ENCODE measurements at regions of chr17 and their contacts with region 1.

Region 1: DNA sequence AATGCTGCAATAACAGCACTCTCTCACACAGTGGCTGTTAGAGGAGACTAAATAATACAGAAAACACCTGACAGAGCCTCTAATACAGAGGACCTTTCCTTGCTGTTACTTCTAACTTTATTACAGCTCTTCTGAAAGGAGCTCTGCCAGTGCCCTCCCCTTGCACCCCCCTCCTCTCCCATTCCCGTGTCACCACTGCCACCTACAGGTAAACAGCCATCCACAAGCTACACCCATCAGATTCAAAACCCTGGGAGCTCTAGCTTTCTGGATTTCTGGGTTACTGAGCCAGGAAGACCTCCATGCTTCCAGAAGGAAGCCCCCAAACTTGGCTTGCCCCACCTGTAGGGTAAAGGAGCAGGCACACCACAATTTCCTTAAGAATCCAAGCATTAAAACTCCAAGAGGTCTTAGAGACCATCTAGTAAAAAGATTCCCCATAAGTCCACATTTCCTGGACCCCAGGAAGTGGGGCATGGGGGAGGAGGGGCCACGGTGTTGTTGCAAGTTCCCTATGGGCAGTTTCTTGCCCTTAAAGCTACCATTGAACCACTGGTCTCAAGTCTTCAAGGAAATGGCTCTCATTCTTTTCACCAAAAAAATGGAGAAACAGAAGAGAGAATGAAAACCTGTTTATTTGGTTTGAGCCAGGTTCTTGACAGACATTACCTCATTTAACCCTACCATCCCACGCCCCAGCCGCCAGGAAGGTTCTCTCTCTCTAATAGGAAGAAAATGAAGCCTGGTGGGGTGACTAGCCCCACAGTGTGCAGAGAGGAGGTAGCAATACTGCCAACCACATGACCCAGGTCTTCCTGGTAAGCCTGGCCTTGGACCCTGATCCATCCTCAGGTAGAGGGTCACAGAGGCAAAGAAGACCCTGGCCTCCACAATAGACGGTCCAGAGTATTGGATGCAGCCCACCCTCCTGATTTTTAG is 52.8 kb downstream of the TOM1L2 start:
- DNase-seq: peak; percentile 77
- ATAC-seq: peak; percentile 81
- H3K4me3 Mint-ChIP-seq: no peak overlapping the region
- H3K27ac Mint-ChIP-seq: no peak overlapping the region
- H3K4me1 Mint-ChIP-seq: peaks cover 14% of the 10 kb centered on the region
- H3K27me3 Mint-ChIP-seq: no peaks in the 10 kb centered on the region

Region 2: GRCh38 chr17:17681187-17681848 is 238.1 kb before region 1 on chr17 and contains the start of gene RAI1:
- CTCF ChIA-PET with region 1: interaction called, 11 read pairs
- DNase-seq: peak; percentile 75
- ATAC-seq: peak; percentile 72
- H3K4me3 Mint-ChIP-seq: peak within 1 kb of the TSS; percentile 85
- H3K27ac Mint-ChIP-seq: peak within 1 kb of the TSS; percentile 83
- H3K4me1 Mint-ChIP-seq: peaks cover 37% of the 10 kb centered on the region
- H3K27me3 Mint-ChIP-seq: peaks cover 13% of the 10 kb centered on the region
- total RNA-seq, gene RAI1: 17.4 to 24.4 TPM

Region 3: GRCh38 chr17:17783116-17783824 is 136.2 kb before region 1 on chr17:
- CTCF ChIA-PET with region 1: no interaction called
- DNase-seq: peak; percentile 73
- ATAC-seq: peak; percentile 66
- H3K4me3 Mint-ChIP-seq: peak overlapping the region; percentile 57
- H3K27ac Mint-ChIP-seq: no peak overlapping the region
- H3K4me1 Mint-ChIP-seq: peaks cover 5% of the 10 kb centered on the region
- H3K27me3 Mint-ChIP-seq: peaks cover 30% of the 10 kb centered on the region

Region 4: DNA sequence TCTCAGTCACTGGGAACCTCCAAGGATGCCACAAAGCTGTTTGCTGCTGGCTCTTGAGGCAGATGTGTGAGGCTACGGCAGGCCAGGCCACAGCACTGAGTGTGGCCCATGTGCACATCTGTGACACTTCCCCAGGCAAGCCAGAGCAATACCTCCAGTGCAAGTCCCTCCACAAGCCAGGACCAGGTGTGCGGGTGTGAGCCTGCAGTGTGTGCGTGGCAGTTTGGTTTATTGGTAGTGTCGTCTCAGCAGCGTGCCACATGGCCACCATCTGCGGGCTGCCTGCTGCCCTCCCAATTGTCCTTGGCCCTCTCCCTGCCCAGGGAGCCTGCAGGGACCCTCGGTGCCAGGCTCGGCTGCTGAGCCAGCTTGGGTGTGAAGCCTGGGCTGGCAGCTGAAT is 72.8 kb before region 1 on chr17:
- CTCF ChIA-PET with region 1: no interaction called
- DNase-seq: no peak
- ATAC-seq: no peak
- H3K4me3 Mint-ChIP-seq: no peak overlapping the region
- H3K27ac Mint-ChIP-seq: no peak overlapping the region
- H3K4me1 Mint-ChIP-seq: peaks cover 50% of the 10 kb centered on the region
- H3K27me3 Mint-ChIP-seq: no peaks in the 10 kb centered on the region

Region 5: DNA sequence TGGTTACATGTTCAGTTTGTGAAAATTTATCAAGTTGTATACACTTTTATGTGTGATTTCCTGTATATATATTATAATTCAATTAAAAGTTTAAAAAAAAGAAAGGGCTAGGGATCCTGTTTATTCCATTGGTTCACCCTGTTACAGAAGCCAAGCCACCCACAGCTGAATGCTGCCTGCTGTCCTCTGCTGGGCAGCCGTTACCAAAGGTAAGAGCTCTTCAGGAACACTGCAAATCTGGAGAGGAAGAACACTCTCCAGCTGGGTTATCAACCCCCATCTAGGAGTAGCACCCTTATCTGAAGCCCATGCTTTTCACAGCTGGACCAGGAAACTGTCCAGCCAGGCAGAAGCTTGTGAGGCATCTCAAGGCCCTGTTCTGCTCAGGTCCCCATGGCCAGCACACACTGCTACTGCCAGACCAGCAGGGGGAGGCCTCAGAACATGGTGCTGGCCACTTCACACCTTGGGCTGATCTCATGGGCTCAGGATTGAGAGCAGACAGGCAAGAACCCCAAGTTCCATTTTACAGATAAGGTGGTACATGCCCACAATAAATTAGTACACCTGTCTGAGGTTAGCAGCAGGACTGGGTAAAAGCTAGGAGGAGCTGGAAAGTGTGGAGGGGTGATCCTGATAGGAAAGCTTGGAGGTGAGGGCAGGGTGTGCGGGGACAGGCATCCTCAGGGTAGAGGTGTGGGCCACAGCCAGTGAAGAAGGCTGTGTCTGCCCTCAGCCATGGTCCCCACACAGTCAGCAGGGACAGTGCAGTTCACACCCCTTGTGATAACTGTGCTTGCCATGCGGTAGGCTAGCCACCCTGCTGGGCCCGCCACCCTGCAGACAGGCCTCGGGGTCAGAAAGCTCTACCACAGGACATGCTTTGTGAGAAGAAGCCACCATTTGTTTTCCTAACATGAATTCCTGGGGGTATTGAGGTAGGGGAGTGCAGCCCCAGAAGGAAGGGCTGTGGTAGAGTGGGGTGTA is 28.4 kb before region 1 on chr17:
- CTCF ChIA-PET with region 1: interaction called, 10 read pairs
- DNase-seq: peak; percentile 71
- ATAC-seq: peak; percentile 87
- H3K4me3 Mint-ChIP-seq: no peak overlapping the region
- H3K27ac Mint-ChIP-seq: no peak overlapping the region
- H3K4me1 Mint-ChIP-seq: no peaks in the 10 kb centered on the region
- H3K27me3 Mint-ChIP-seq: no peaks in the 10 kb centered on the region

Region 6: DNA sequence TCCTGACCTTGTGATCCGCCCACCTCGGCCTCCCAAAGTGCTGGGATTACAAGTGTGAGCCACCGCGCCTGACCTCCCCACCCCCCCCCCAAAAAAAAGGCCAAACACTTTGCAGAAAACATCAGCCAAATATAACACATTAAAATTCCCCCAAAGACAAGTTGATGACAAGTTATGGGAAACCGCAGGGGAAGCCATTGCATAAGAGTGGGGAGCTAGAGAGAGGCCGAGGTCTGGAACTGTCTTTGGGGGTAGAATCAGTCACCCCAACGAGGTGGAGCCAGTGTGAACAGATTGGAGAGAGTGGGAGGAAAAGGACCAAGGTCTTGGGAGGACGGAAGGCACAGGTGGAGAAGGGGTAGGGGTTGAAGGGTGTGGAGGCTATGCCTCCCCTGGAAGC is 56.0 kb after region 1 on chr17:
- CTCF ChIA-PET with region 1: no interaction called
- DNase-seq: no peak
- ATAC-seq: no peak
- H3K4me3 Mint-ChIP-seq: no peak overlapping the region
- H3K27ac Mint-ChIP-seq: no peak overlapping the region
- H3K4me1 Mint-ChIP-seq: peaks cover 31% of the 10 kb centered on the region
- H3K27me3 Mint-ChIP-seq: no peaks in the 10 kb centered on the region

Region 7: GRCh38 chr17:18087610-18088491 is 168.4 kb after region 1 on chr17 and contains the start of gene DRG2:
- CTCF ChIA-PET with region 1: no interaction called
- DNase-seq: peak; percentile 91
- ATAC-seq: peak; percentile 95
- H3K4me3 Mint-ChIP-seq: peak within 1 kb of the TSS; percentile 99
- H3K27ac Mint-ChIP-seq: peak within 1 kb of the TSS; percentile 96
- H3K4me1 Mint-ChIP-seq: peaks cover 25% of the 10 kb centered on the region
- H3K27me3 Mint-ChIP-seq: no peaks in the 10 kb centered on the region
- total RNA-seq, gene DRG2: 54.5 to 57.0 TPM

Measured in activated CD8-positive, alpha-beta memory T cell treated with anti-CD3 and anti-CD28 coated beads, Interleukin-2, amount 10 ng/mL, durations not matched to agents 7 days and 5 days (primary cell).